Dorsolateral prefrontal cortex (tissue), 120 donors: ENCODE measurements at regions of chr7 and their contacts with region 1.

Region 1: GRCh38 chr7:130205084-130205947 is at the start of gene TMEM209:
- DNase-seq: peak; percentile 89 to 96 (median 95)
- H3K4me3 ChIP-seq: peak within 1 kb of the TSS; percentile 55 to 97 (median 81)
- H3K27ac ChIP-seq: peak within 1 kb of the TSS in 58 of 59 donors; percentile 53 to 95 (median 90)
- H3K27me3 ChIP-seq: no peaks in the 10 kb centered on the region
- CTCF ChIP-seq: peak in 35 of 56 donors; percentile 4 to 58 (median 26)
- total RNA-seq, gene TMEM209: 9.8 to 28.0 (median 15.9) TPM

Region 2: DNA sequence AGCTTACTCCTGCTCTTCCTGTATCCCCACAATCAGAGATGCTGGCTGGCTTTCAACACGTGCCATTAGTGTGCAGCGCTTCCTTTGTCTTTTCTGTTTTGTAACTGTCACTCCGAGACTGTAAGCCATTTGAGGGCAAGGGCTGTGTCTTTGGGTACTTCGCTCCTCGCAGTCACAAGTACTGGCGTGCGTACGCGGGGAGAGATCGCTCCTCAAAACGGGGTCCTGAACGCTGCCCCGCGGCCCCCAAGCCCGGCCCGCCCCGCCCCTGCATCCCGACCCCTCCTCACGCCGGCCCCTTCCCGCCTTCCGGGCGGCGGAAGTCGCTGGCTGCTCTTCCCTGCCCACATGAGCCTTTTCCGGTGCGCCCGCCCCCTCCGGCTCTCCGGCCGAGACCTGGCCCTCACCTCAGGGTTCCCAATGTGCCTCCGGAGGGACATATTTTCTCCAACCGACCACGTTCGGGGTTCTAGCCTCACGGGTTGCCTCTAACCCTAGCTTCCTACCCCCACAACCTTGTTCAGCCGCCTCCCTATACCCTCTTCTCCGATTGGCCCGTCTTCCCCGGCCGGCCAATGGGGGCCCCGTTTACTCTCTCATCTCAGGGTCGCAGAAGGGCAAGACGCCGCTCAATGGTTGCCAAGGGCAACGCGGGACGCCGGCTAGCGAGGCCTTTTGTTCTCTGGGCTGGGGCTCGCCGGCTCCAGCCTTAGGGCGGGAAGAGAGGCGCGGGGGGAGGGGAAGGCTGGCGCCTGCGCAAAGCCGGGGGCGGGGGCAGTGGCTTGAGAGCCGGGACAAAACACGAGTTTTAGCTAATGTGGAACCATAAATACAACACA is 235.4 kb after region 1 on chr7 and contains the start of gene CEP41:
- intact Hi-C with region 1: loop called in 1 of 2 experiments (anchors 10 kb)
- DNase-seq: peak; percentile 97 to 99 (median 98)
- H3K4me3 ChIP-seq: peak within 1 kb of the TSS; percentile 48 to 91 (median 78)
- H3K27ac ChIP-seq: peak within 1 kb of the TSS; percentile 36 to 96 (median 82)
- H3K27me3 ChIP-seq: no peaks in the 10 kb centered on the region
- CTCF ChIP-seq: peak in 19 of 56 donors; percentile 5 to 43 (median 19)
- total RNA-seq, gene CEP41: 10.4 to 41.3 (median 27.0) TPM